ENCODE measurements at regions of chr6 and their contacts with region 1.

Region 1: DNA sequence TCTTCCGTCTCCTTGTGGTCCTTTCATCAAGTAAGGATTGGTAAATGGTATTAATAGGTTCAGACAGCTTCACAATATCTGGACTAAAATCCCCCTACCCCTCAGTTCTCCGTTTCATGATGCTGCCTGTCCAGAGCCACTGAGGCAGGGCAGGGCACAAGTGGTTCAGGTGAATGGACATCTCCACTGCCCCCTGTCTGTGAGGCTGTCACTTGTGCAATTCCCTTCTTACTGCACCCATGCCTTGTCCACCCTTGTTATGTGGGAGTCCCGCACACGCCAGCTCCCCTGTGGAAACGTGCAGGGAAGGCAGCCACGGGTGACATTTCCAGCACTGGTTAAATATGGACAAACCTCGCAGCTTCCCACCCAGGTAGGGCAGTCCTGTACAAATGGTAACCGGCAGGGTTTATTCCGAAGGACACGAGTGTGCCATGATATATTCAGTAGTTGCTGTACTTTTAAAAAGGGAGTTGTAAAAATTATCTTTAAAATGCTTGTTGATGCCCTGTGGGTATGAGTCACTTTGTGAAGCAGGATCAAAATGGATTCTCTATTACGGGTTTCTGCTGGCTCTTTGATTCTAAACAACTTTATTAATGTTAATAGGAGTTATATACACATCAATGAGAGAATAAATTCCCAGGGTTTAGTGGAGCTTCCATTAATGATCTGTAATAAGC is 73.5 kb downstream of the FYN start:
- DNase-seq: no peak
- ATAC-seq: peak in 1 of 8 donors; percentile 13
- H3K4me3 ChIP-seq: no peak overlapping the region
- H3K27ac ChIP-seq: no peak overlapping the region
- H3K4me1 ChIP-seq: peaks cover 6 to 71% (median 44%) of the 10 kb centered on the region in 9 donors
- H3K27me3 ChIP-seq: no peaks in the 10 kb centered on the region
- CTCF ChIP-seq: peak in 2 of 9 donors; percentile 10 to 17

Region 2: GRCh38 chr6:111743862-111744692 is 55.6 kb before region 1 on chr6:
- intact Hi-C with region 1: loop called in 2 of 10 experiments (anchors 5 kb)
- DNase-seq: peak in 1 of 2 donors; percentile 88
- ATAC-seq: peak; percentile 85 to 91 (median 89)
- H3K4me3 ChIP-seq: peak overlapping the region in 1 of 10 donors; percentile 0
- H3K27ac ChIP-seq: peak overlapping the region; percentile 37 to 79 (median 72)
- H3K4me1 ChIP-seq: peaks cover 9 to 98% (median 85%) of the 10 kb centered on the region in 9 donors
- H3K27me3 ChIP-seq: no peaks in the 10 kb centered on the region
- CTCF ChIP-seq: no peak

Measured in heart right ventricle (tissue), 16 donors.